ENCODE measurements at regions of chr1 and their contacts with region 1.

Region 1: GRCh38 chr1:160519642-160520435 is 3.2 kb downstream of the SLAMF6 start:
- DNase-seq: peak in 3 of 9 experiments; percentile 28 to 73 (median 59)
- ATAC-seq: peak; percentile 60
- H3K4me3 ChIP-seq: peak overlapping the region; percentile 69 to 81
- H3K4me3 Mint-ChIP-seq: peak overlapping the region; percentile 91
- H3K27ac ChIP-seq: peak overlapping the region; percentile 65 to 74
- H3K27ac Mint-ChIP-seq: peak overlapping the region; percentile 95
- H3K4me1 ChIP-seq: peaks cover 62% of the 10 kb centered on the region
- H3K4me1 Mint-ChIP-seq: peaks cover 93% of the 10 kb centered on the region
- H3K27me3 ChIP-seq: no peaks in the 10 kb centered on the region
- H3K27me3 Mint-ChIP-seq: no peaks in the 10 kb centered on the region
- CTCF ChIP-seq: peak; percentile 58

Region 2: GRCh38 chr1:160376525-160377131 is 143.2 kb before region 1 on chr1:
- CTCF ChIA-PET with region 1: no interaction called
- POLR2A ChIA-PET with region 1: no interaction called
- intact Hi-C with region 1: no loop called
- DNase-seq: peak in 5 of 9 experiments; percentile 13 to 75 (median 53)
- ATAC-seq: peak; percentile 61
- H3K4me3 ChIP-seq: no peak overlapping the region
- H3K4me3 Mint-ChIP-seq: no peak overlapping the region
- H3K27ac ChIP-seq: no peak overlapping the region
- H3K27ac Mint-ChIP-seq: no peak overlapping the region
- H3K4me1 ChIP-seq: peaks cover 12% of the 10 kb centered on the region
- H3K4me1 Mint-ChIP-seq: peaks cover 15% of the 10 kb centered on the region
- H3K27me3 ChIP-seq: no peaks in the 10 kb centered on the region
- H3K27me3 Mint-ChIP-seq: no peaks in the 10 kb centered on the region
- CTCF ChIP-seq: peak; percentile 65

Region 3: GRCh38 chr1:160428655-160429054 is 91.2 kb before region 1 on chr1:
- CTCF ChIA-PET with region 1: interaction called, 3 read pairs
- POLR2A ChIA-PET with region 1: interaction called, 10 read pairs
- intact Hi-C with region 1: loop called (anchors 2 to 5 kb)
- DNase-seq: peak in 6 of 9 experiments; percentile 24 to 73 (median 54)
- ATAC-seq: peak; percentile 54
- H3K4me3 ChIP-seq: peak overlapping the region in 1 of 2 experiments; percentile 20
- H3K4me3 Mint-ChIP-seq: peak overlapping the region; percentile 55
- H3K27ac ChIP-seq: peak overlapping the region; percentile 50 to 86
- H3K27ac Mint-ChIP-seq: peak overlapping the region; percentile 86
- H3K4me1 ChIP-seq: peaks cover 63% of the 10 kb centered on the region
- H3K4me1 Mint-ChIP-seq: peaks cover 62% of the 10 kb centered on the region
- H3K27me3 ChIP-seq: no peaks in the 10 kb centered on the region
- H3K27me3 Mint-ChIP-seq: no peaks in the 10 kb centered on the region
- CTCF ChIP-seq: peak; percentile 41

Region 4: DNA sequence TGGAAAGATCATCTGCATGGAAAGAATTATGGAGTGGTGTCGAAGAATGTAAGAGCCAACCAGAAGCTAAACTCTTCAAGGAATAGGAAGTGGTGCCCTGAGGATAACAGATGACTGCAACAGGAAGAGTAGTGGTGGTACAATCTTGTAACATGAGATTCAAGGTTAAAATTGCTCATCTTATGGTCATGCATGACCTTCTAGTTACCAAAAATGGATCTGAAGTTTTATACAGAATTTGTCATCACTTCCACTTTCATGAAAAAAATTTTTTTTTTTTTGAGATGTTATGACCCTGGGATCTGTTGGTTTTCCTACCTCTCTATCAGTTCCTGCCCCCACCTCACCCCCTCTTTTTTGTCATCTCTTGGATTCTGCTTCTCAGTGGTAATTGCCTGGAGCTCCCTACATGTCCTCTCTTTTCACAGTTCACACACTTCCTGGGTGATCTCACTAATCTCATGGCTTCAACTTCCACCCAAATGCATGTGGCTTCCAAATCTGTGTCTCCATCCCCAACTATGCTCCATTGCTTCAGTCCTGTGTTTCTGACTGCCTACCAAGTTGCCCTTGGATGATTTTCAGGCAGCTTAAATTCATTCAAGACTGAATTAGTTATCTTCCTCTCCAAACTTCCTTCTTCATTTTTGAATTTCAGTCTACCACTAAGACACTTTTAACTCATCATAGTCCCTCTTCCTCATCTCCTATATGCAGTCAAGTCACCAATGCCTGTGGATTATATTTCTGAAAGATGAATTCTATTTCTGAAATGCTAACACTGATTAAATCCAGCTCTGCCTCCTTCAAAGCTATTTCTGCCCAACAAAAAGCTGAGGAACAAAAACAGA is 45.2 kb before region 1 on chr1:
- CTCF ChIA-PET with region 1: no interaction called
- POLR2A ChIA-PET with region 1: no interaction called
- intact Hi-C with region 1: loop called in 1 of 2 experiments (anchors 5 kb)
- DNase-seq: no peak
- ATAC-seq: peak; percentile 20
- H3K4me3 ChIP-seq: no peak overlapping the region
- H3K4me3 Mint-ChIP-seq: no peak overlapping the region
- H3K27ac ChIP-seq: no peak overlapping the region
- H3K27ac Mint-ChIP-seq: no peak overlapping the region
- H3K4me1 ChIP-seq: peaks cover 18% of the 10 kb centered on the region
- H3K4me1 Mint-ChIP-seq: peaks cover 7% of the 10 kb centered on the region
- H3K27me3 ChIP-seq: no peaks in the 10 kb centered on the region
- H3K27me3 Mint-ChIP-seq: no peaks in the 10 kb centered on the region
- CTCF ChIP-seq: no peak

Region 5: GRCh38 chr1:160494620-160495019 is 25.2 kb before region 1 on chr1:
- CTCF ChIA-PET with region 1: no interaction called
- POLR2A ChIA-PET with region 1: interaction called, 4 read pairs
- intact Hi-C with region 1: loop called in 1 of 2 experiments (anchors 5 kb)
- DNase-seq: peak in 2 of 9 experiments; percentile 29 to 31
- ATAC-seq: no peak
- H3K4me3 ChIP-seq: no peak overlapping the region
- H3K4me3 Mint-ChIP-seq: no peak overlapping the region
- H3K27ac ChIP-seq: no peak overlapping the region
- H3K27ac Mint-ChIP-seq: no peak overlapping the region
- H3K4me1 ChIP-seq: no peaks in the 10 kb centered on the region
- H3K4me1 Mint-ChIP-seq: peaks cover 36% of the 10 kb centered on the region
- H3K27me3 ChIP-seq: no peaks in the 10 kb centered on the region
- H3K27me3 Mint-ChIP-seq: no peaks in the 10 kb centered on the region
- CTCF ChIP-seq: no peak

Region 6: GRCh38 chr1:160504666-160505065 is 15.2 kb before region 1 on chr1:
- CTCF ChIA-PET with region 1: no interaction called
- POLR2A ChIA-PET with region 1: interaction called, 3 read pairs
- intact Hi-C with region 1: loop called in 1 of 2 experiments (anchors 2 kb)
- DNase-seq: no peak
- ATAC-seq: no peak
- H3K4me3 ChIP-seq: no peak overlapping the region
- H3K4me3 Mint-ChIP-seq: no peak overlapping the region
- H3K27ac ChIP-seq: peak overlapping the region in 1 of 2 experiments; percentile 3
- H3K27ac Mint-ChIP-seq: peak overlapping the region; percentile 37
- H3K4me1 ChIP-seq: peaks cover 25% of the 10 kb centered on the region
- H3K4me1 Mint-ChIP-seq: peaks cover 59% of the 10 kb centered on the region
- H3K27me3 ChIP-seq: no peaks in the 10 kb centered on the region
- H3K27me3 Mint-ChIP-seq: no peaks in the 10 kb centered on the region
- CTCF ChIP-seq: no peak

Region 7: DNA sequence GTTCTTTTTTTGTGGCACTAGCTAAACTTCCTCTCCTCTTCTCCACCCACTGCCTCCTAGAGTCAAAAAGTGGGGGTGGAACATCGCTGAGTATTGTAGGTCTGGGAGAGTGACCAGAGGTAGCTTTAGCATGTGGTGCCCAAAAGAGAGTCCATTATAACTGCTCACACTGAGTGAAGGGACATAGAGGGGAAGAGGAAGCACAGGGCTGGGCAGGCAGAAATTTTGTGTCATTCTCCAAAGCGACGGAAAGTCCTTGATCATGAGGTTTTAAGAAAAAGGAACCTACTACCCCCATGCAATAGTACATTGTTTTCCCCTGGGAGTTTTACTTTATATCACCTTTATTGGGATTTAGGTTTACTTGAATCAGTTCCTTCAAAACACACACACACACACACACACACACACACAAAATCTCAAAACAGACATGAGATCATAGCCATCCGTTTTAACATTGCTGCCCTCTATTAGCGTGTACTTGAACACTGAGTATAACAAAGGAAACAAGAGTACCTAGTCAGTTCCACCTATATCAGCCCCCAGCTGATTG is 55.3 kb after region 1 on chr1:
- CTCF ChIA-PET with region 1: no interaction called
- POLR2A ChIA-PET with region 1: interaction called, 7 read pairs
- intact Hi-C with region 1: loop called in 1 of 2 experiments (anchors 2 kb)
- DNase-seq: peak in 2 of 9 experiments; percentile 31 to 52
- ATAC-seq: no peak
- H3K4me3 ChIP-seq: peak overlapping the region; percentile 20 to 50
- H3K4me3 Mint-ChIP-seq: peak overlapping the region; percentile 92
- H3K27ac ChIP-seq: peak overlapping the region; percentile 8 to 72
- H3K27ac Mint-ChIP-seq: peak overlapping the region; percentile 91
- H3K4me1 ChIP-seq: peaks cover 83% of the 10 kb centered on the region
- H3K4me1 Mint-ChIP-seq: peaks cover 85% of the 10 kb centered on the region
- H3K27me3 ChIP-seq: no peaks in the 10 kb centered on the region
- H3K27me3 Mint-ChIP-seq: no peaks in the 10 kb centered on the region
- CTCF ChIP-seq: no peak